MCF 10A (cell line): ENCODE measurements at regions of chr12 and their contacts with region 1.

Region 1: DNA sequence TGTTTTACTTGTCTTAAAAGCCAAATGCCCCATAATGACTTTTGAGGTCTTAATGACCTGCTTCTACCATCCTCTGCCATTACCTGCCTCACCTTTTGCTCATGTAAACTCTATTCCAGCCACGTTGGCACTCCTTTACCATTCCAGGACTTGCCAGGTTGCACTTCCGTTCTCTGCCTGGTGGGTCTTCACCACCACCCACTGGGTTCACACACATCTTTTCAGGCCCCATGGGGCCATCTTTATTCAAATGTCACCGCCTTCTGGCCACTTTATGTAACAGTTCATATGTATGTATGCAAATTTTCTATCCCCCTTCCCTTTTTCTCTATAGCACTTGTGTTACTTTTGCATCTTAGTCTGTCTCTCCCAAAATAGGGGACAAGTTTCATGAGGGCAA is 57.7 kb downstream of the ATP2A2 start:
- DNase-seq: peak; percentile 30
- H3K4me3 Mint-ChIP-seq: no peak overlapping the region
- H3K27ac Mint-ChIP-seq: peak overlapping the region; percentile 47
- H3K4me1 Mint-ChIP-seq: peaks cover 24% of the 10 kb centered on the region
- H3K27me3 Mint-ChIP-seq: no peaks in the 10 kb centered on the region
- CTCF ChIP-seq: peak; percentile 9

Region 2: DNA sequence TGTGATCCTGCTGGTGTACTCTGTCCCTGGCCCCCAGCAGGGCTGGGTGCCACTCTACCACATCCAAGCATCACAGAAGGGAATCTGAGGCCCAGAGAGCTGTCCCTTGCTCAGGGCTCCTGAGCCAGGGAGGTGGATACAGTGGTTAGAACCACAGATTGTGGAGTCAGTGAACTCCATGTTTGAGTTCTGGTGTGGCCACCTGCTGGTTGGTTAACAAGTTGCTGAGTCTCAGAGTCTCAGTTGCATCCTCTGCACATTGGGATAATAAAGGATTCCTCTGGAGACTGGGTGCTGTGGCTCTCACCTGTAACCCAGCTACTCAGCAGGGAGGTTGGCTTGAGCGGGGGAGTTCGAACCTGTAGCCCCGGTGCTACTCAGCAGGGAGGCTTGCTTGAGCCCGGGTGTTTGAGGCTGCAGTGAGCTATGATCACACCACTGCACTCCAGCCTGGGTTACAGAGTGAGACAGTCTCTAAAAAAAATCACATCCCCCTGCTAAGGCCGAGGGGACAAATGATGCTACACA is 725.7 kb before region 1 on chr12:
- CTCF ChIA-PET with region 1: no interaction called
- POLR2A ChIA-PET with region 1: no interaction called
- intact Hi-C with region 1: no loop called
- DNase-seq: peak; percentile 34
- H3K4me3 Mint-ChIP-seq: no peak overlapping the region
- H3K27ac Mint-ChIP-seq: no peak overlapping the region
- H3K4me1 Mint-ChIP-seq: no peaks in the 10 kb centered on the region
- H3K27me3 Mint-ChIP-seq: peaks cover 52% of the 10 kb centered on the region
- CTCF ChIP-seq: peak; percentile 25

Region 3: GRCh38 chr12:110100315-110100970 is 238.3 kb before region 1 on chr12:
- CTCF ChIA-PET with region 1: interaction called, 4 read pairs
- POLR2A ChIA-PET with region 1: no interaction called
- intact Hi-C with region 1: loop called (anchors 2 kb)
- DNase-seq: peak; percentile 78
- H3K4me3 Mint-ChIP-seq: no peak overlapping the region
- H3K27ac Mint-ChIP-seq: no peak overlapping the region
- H3K4me1 Mint-ChIP-seq: peaks cover 7% of the 10 kb centered on the region
- H3K27me3 Mint-ChIP-seq: no peaks in the 10 kb centered on the region
- CTCF ChIP-seq: peak; percentile 85

Region 4: GRCh38 chr12:110349531-110350151 is 10.9 kb after region 1 on chr12:
- CTCF ChIA-PET with region 1: interaction called, 3 read pairs
- POLR2A ChIA-PET with region 1: interaction called, 25 read pairs
- intact Hi-C with region 1: no loop called
- DNase-seq: no peak
- H3K4me3 Mint-ChIP-seq: no peak overlapping the region
- H3K27ac Mint-ChIP-seq: no peak overlapping the region
- H3K4me1 Mint-ChIP-seq: no peaks in the 10 kb centered on the region
- H3K27me3 Mint-ChIP-seq: no peaks in the 10 kb centered on the region
- CTCF ChIP-seq: no peak

Region 5: DNA sequence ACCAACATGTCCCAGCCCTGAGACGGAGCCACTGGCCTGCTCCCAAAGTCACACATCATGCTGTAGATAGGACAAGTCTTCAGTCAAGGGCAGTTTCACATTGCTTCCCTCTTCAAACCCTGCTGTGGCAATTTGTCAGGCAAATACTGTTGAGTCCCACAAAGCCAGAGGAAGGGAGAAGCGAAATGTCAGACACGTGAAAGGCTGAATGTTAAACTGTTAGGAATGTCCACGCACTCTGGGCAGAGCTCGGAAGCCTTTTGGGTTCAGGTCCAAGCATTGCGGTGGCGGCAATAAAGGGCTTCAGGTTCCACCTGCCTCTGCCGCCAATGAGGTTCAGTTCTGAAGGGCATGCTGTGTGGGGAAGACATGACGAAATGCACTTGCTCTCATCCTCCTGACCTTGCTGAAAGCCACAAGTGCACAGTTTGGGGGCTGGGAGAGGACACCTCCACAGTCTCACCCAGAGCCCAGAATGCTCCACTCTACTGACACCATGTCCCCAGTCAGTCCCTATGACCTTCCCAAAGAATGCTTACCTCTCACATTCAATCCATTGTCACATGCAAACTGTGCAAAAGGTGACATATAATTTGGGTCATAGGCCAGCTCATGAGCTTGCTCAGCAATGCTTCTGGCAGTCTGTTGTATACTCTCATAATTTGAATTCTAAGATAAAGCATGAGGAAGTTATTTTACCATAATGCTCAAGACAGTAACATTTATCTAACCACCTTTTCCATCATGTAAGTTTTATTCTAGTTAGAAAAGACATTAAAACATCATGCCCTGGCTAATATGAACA is 199.1 kb after region 1 on chr12:
- CTCF ChIA-PET with region 1: no interaction called
- POLR2A ChIA-PET with region 1: no interaction called
- intact Hi-C with region 1: no loop called
- DNase-seq: peak; percentile 97
- H3K4me3 Mint-ChIP-seq: peak overlapping the region; percentile 47
- H3K27ac Mint-ChIP-seq: peak overlapping the region; percentile 69
- H3K4me1 Mint-ChIP-seq: peaks cover 40% of the 10 kb centered on the region
- H3K27me3 Mint-ChIP-seq: no peaks in the 10 kb centered on the region
- CTCF ChIP-seq: no peak

Region 6: GRCh38 chr12:111557271-111558106 is 1218.7 kb after region 1 on chr12:
- CTCF ChIA-PET with region 1: no interaction called
- POLR2A ChIA-PET with region 1: no interaction called
- intact Hi-C with region 1: no loop called
- DNase-seq: no peak
- H3K4me3 Mint-ChIP-seq: no peak overlapping the region
- H3K27ac Mint-ChIP-seq: peak overlapping the region; percentile 5
- H3K4me1 Mint-ChIP-seq: peaks cover 17% of the 10 kb centered on the region
- H3K27me3 Mint-ChIP-seq: no peaks in the 10 kb centered on the region
- CTCF ChIP-seq: no peak